Activated CD4-positive, alpha-beta memory T cell treated with anti-CD3 and anti-CD28 coated beads for 36 hours (primary cell): ENCODE measurements at regions of chr9 and their contacts with region 1.

Region 1: GRCh38 chr9:97848582-97849237 is 4.3 kb upstream of the FOXE1 start:
- DNase-seq: peak; percentile 39
- H3K4me3 Mint-ChIP-seq: peak overlapping the region; percentile 58
- H3K27ac Mint-ChIP-seq: no peak overlapping the region
- H3K4me1 Mint-ChIP-seq: peaks cover 21% of the 10 kb centered on the region
- H3K27me3 Mint-ChIP-seq: peaks cover 66% of the 10 kb centered on the region

Region 2: GRCh38 chr9:97803167-97804058 is 45.3 kb before region 1 on chr9:
- CTCF ChIA-PET with region 1: no interaction called
- POLR2A ChIA-PET with region 1: no interaction called
- intact Hi-C with region 1: loop called (anchors 5 kb)
- DNase-seq: peak; percentile 75
- H3K4me3 Mint-ChIP-seq: peak overlapping the region; percentile 70
- H3K27ac Mint-ChIP-seq: no peak overlapping the region
- H3K4me1 Mint-ChIP-seq: peaks cover 3% of the 10 kb centered on the region
- H3K27me3 Mint-ChIP-seq: peaks cover 15% of the 10 kb centered on the region

Region 3: GRCh38 chr9:97820373-97820772 is 28.3 kb before region 1 on chr9:
- CTCF ChIA-PET with region 1: no interaction called
- POLR2A ChIA-PET with region 1: no interaction called
- intact Hi-C with region 1: no loop called
- DNase-seq: no peak
- H3K4me3 Mint-ChIP-seq: no peak overlapping the region
- H3K27ac Mint-ChIP-seq: no peak overlapping the region
- H3K4me1 Mint-ChIP-seq: no peaks in the 10 kb centered on the region
- H3K27me3 Mint-ChIP-seq: peaks cover 43% of the 10 kb centered on the region